Lower leg skin (tissue), 4 donors: ENCODE measurements at regions of chr1 and their contacts with region 1.

Region 1: DNA sequence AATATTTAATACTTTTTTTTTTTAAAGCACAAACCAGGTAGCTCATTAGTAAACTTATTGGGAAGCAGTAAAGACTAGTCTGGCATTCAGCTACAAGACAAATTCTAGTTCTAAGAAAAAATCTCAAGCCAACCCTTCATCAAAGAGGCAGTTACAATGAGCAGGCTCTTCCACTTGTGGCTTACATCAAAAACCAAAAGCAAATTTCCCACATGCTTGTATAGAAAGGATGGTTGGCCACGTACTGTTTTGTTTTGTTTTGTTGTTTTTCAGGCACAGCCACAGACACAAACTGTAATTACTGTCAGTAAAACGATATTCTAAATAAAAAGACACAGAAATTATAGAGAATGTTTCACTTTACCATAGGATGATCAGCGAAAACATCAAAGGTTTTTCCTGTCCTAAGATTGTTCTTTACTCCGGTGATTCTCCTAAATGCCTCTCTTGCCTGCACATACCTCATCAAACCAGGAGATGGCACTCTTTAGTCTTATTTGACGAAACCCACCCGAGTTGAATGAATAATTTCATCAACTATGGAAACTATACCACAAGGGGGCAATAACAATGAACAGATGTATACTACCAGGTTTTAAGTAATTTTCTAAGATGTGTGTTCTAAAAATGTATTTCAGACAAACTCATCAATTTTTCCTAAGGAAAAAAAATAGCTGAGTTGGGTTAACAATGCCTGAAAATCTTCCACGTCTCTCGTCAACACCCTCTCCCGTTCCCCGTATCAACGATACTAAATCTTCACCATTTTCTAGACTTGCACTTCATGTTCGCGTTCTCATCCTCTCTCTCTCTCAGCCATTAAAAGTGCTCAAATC is 26.9 kb downstream of the RPL5 start:
- DNase-seq: peak in 1 of 2 donors; percentile 69
- H3K4me3 ChIP-seq: no peak overlapping the region
- CTCF ChIP-seq: peak in 1 of 3 donors; percentile 92
- POLR2A ChIP-seq: no peak

Region 2: DNA sequence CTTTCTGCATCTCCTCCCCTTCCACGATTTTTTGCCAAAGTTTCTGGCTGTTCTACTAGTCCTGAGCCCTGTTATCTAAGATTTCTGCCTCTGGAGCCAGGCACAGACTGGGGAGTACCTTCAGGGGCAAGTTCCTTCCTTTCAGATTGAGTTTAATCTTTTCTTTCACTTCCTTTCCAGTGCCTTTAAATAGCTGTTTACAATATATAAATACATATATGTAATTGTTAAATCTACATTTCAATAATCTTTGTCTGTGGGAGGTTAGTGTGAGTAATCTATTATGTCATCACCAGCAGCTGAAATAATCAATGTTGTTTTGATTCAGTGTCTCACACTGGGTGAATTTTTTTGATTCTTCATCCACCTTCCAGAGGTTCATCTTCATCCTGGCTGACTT is 70.7 kb after region 1 on chr1:
- intact Hi-C with region 1: no loop called
- DNase-seq: no peak
- H3K4me3 ChIP-seq: no peak overlapping the region
- CTCF ChIP-seq: no peak
- POLR2A ChIP-seq: no peak

Region 3: DNA sequence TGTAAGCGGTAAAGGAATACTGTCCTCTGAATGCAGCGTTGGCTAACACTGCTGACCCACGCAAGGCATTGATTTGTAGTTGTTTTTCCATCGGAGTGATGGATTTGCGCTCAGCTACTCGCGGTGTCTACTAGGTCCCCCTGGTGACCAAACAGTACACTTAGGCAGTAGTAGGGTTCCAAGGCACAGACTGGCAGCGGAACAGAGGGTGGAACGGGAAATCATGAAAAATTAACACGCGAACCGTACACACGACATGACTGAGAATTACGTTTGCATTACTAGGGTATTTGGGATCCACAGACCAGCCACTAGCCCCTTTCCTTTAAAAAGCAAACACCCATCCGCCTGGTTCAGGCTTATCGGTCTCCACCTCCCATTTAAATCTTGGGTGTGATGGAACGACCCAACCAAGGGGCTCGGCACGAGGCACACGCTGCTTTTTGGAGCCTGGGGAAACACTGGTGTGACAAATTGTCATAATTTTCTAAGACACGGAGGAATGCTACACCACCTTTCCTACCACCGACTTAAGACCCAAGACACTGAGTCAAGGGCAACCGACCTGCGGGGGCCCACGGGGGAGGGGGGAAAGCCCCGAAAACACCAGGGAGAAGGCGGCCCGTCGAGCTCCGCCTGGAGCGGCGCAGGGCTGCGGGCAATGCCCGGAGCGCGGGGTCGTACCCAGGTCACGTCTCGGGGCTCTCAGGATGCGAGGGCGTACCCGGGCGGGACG is 101.8 kb after region 1 on chr1:
- intact Hi-C with region 1: loop called (anchors 10 kb)
- DNase-seq: peak; percentile 63 to 90
- H3K4me3 ChIP-seq: peak overlapping the region; percentile 80
- CTCF ChIP-seq: peak in 1 of 3 donors; percentile 42
- POLR2A ChIP-seq: no peak

Region 4: GRCh38 chr1:92994105-92994712 is 135.4 kb after region 1 on chr1:
- intact Hi-C with region 1: loop called (anchors 2 kb)
- DNase-seq: peak; percentile 81 to 86
- H3K4me3 ChIP-seq: no peak overlapping the region
- CTCF ChIP-seq: peak in 1 of 3 donors; percentile 66
- POLR2A ChIP-seq: no peak

Region 5: GRCh38 chr1:93056214-93056613 is 197.4 kb after region 1 on chr1:
- intact Hi-C with region 1: loop called (anchors 10 kb)
- DNase-seq: no peak
- H3K4me3 ChIP-seq: no peak overlapping the region
- CTCF ChIP-seq: no peak
- POLR2A ChIP-seq: no peak